ENCODE measurements at regions of chr1 and their contacts with region 1.

Region 1: DNA sequence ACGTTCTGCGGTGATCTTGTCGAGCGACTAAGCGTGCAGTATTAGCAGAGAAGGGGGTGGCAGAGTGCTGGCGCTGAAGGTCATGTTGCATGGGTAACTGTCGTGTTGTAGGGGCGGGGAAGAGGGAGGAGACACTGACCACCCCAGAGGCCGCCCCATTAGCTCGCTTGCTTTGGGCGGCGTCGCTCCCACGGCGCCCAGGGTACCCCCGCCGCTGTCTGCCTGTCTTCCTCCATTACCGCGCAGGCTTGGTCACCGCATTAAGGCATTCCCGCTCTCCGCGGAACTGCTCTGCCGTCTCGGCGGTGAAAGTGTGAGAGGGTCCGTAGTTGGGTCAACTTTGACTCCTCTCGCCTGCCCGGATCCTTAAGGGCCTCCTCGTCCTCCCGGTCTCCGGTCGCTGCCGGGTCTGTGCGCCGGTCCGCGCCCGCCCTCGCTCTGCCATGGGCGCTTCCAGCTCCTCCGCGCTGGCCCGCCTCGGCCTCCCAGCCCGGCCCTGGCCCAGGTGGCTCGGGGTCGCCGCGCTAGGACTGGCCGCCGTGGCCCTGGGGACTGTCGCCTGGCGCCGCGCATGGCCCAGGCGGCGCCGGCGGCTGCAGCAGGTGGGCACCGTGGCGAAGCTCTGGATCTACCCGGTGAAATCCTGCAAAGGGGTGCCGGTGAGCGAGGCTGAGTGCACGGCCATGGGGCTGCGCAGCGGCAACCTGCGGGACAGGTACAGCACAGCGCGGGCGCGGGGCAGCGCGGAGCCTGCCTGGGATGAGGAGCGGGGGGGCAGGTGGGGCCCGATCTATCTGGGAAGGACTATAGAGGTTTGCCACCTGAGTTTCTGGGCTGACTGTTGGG is at the start of gene MTARC2:
- DNase-seq: peak; percentile 79 to 88
- H3K4me3 ChIP-seq: peak within 1 kb of the TSS; percentile 74
- H3K27ac ChIP-seq: 0 out of 2 replicates have a peak within 1 kb of the TSS, but pooled peaks have one; percentile 33
- H3K4me1 ChIP-seq: peaks cover 24% of the 10 kb centered on the region
- H3K27me3 ChIP-seq: no peaks in the 10 kb centered on the region
- CTCF ChIP-seq: no peak
- total RNA-seq, gene MTARC2: 23.1 and 32.2 TPM in 2 replicates

Region 2: GRCh38 chr1:219518168-219518907 is 1230.0 kb before region 1 on chr1:
- CTCF ChIA-PET with region 1: no interaction called
- POLR2A ChIA-PET with region 1: interaction called, 11 read pairs
- intact Hi-C with region 1: no loop called
- DNase-seq: peak; percentile 64 to 75
- H3K4me3 ChIP-seq: no peak overlapping the region
- H3K27ac ChIP-seq: peak overlapping the region; percentile 42; the same call in 1 of the 2 replicates
- H3K4me1 ChIP-seq: peaks cover 30% of the 10 kb centered on the region
- H3K27me3 ChIP-seq: no peaks in the 10 kb centered on the region
- CTCF ChIP-seq: no peak

Region 3: GRCh38 chr1:220195701-220196100 is 552.6 kb before region 1 on chr1:
- CTCF ChIA-PET with region 1: no interaction called
- POLR2A ChIA-PET with region 1: interaction called, 12 read pairs
- intact Hi-C with region 1: no loop called
- DNase-seq: no peak
- H3K4me3 ChIP-seq: no peak overlapping the region
- H3K27ac ChIP-seq: 0 out of 2 replicates have a peak overlapping the region, but pooled peaks have one; percentile 12
- H3K4me1 ChIP-seq: no peaks in the 10 kb centered on the region
- H3K27me3 ChIP-seq: no peaks in the 10 kb centered on the region
- CTCF ChIP-seq: no peak

Region 4: GRCh38 chr1:220594356-220594755 is 154.0 kb before region 1 on chr1:
- CTCF ChIA-PET with region 1: no interaction called
- POLR2A ChIA-PET with region 1: no interaction called
- intact Hi-C with region 1: no loop called
- DNase-seq: no peak
- H3K4me3 ChIP-seq: no peak overlapping the region
- H3K27ac ChIP-seq: no peak overlapping the region
- H3K4me1 ChIP-seq: no peaks in the 10 kb centered on the region
- H3K27me3 ChIP-seq: no peaks in the 10 kb centered on the region
- CTCF ChIP-seq: no peak

Region 5: DNA sequence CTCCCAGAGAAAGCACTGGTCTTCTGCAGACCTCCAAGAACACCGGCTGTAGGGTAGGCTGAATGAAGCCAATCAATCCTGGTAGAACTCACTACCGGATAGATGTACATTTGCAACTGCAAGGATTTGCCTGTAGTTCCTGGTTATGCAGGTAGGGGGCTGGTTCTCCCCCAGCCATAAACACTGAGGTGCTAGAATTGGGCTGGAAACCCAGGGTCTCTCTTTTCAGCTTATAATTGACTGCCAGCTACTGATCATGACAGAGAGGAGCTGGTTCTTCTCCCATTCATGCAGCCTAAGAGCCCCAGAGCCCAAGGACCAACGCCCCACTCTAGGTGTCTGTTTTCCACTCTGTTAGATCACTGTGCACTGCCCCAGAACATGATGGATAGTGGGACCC is 21.7 kb before region 1 on chr1:
- CTCF ChIA-PET with region 1: no interaction called
- POLR2A ChIA-PET with region 1: no interaction called
- intact Hi-C with region 1: no loop called
- DNase-seq: no peak
- H3K4me3 ChIP-seq: no peak overlapping the region
- H3K27ac ChIP-seq: no peak overlapping the region
- H3K4me1 ChIP-seq: no peaks in the 10 kb centered on the region
- H3K27me3 ChIP-seq: no peaks in the 10 kb centered on the region
- CTCF ChIP-seq: peak; percentile 44

Region 6: DNA sequence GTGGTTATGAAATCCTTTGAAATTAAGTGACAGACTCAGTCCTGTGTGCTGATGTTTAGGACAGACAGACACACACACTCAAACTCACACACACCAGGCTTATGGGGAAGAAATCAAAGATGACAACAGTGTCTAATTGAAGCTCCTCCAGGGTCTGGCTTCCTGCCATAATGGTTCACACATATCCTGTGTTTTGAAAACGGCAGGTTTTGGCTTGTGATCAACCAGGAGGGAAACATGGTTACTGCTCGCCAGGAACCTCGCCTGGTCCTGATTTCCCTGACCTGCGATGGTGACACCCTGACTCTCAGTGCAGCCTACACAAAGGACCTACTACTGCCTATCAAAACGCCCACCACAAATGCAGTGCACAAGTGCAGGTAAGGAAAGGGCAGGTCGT is 43.0 kb after region 1 on chr1:
- CTCF ChIA-PET with region 1: interaction called, 4 read pairs
- POLR2A ChIA-PET with region 1: interaction called, 22 read pairs
- intact Hi-C with region 1: no loop called
- DNase-seq: no peak
- H3K4me3 ChIP-seq: no peak overlapping the region
- H3K27ac ChIP-seq: no peak overlapping the region
- H3K4me1 ChIP-seq: peaks cover 18% of the 10 kb centered on the region
- H3K27me3 ChIP-seq: no peaks in the 10 kb centered on the region
- CTCF ChIP-seq: no peak

Region 7: GRCh38 chr1:221149111-221149510 is 400.8 kb after region 1 on chr1:
- CTCF ChIA-PET with region 1: no interaction called
- POLR2A ChIA-PET with region 1: interaction called, 14 read pairs
- intact Hi-C with region 1: no loop called
- DNase-seq: no peak
- H3K4me3 ChIP-seq: no peak overlapping the region
- H3K27ac ChIP-seq: no peak overlapping the region
- H3K4me1 ChIP-seq: no peaks in the 10 kb centered on the region
- H3K27me3 ChIP-seq: no peaks in the 10 kb centered on the region
- CTCF ChIP-seq: no peak